Activated T-helper 2 cell treated with anti-CD3 and anti-CD28 coated beads, Interferon-gamma antibody, Interleukin-2, Interleukin-4, amounts not matched to agents 10 μg/mL and 5 μg/mL and 100 μg/mL, durations not matched to agents 14 hours and 24 hours and 36 hours (primary cell): ENCODE measurements at regions of chr3 and their contacts with region 1.

Region 1: GRCh38 chr3:152688313-152688712 is 146.6 kb upstream of the P2RY1 start:
- DNase-seq: no peak
- H3K4me3 Mint-ChIP-seq: no peak overlapping the region
- H3K27ac Mint-ChIP-seq: no peak overlapping the region
- H3K4me1 Mint-ChIP-seq: peaks cover 22% of the 10 kb centered on the region
- H3K27me3 Mint-ChIP-seq: no peaks in the 10 kb centered on the region

Region 2: GRCh38 chr3:151219056-151219455 is 1469.3 kb before region 1 on chr3:
- intact Hi-C with region 1: loop called (anchors 5 kb)
- DNase-seq: no peak
- H3K4me3 Mint-ChIP-seq: no peak overlapping the region
- H3K27ac Mint-ChIP-seq: no peak overlapping the region
- H3K4me1 Mint-ChIP-seq: peaks cover 14% of the 10 kb centered on the region
- H3K27me3 Mint-ChIP-seq: no peaks in the 10 kb centered on the region

Region 3: DNA sequence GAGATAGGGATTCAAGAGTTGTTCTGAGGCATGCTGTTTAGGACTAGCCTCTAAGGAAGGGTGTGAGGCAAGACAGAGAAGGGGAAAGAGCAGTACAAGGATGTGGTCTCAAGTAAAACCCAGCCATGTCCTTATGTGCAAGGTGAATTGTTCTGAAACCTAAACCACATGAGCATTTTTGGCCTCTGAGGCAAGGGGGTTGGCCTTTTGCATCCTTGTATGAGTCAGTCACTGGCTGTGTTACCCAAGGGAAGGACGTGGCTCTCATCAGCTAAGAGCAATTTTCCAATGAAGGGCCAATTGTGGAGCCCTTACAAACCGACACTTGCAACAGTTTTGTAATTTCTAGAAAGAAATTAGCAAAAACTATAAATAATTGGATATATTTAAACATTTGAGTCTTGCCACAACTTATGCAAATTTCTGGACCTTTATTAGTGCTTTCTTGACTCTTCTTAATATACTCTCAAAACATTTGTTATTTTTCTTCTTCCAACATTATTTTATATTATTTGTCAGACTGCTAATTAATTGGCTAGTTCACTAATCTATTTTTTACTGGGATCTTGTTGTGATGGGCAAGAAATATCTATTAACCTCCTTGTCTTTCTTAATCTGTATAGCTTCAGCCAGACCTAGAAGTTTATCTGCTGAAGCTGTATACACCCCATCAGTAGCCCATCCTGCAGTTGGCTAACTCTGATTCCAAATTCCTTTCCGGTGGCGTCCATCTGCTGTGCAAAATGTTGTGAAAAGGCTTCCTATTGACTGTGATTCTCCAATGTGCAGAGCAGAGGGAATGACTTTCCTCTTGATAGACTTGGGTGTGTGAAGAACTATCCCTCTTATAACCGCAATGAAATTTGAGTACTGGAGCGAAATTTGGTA is 49.0 kb after region 1 on chr3:
- intact Hi-C with region 1: loop called (anchors 1 kb)
- DNase-seq: peak; percentile 15
- H3K4me3 Mint-ChIP-seq: no peak overlapping the region
- H3K27ac Mint-ChIP-seq: no peak overlapping the region
- H3K4me1 Mint-ChIP-seq: peaks cover 17% of the 10 kb centered on the region
- H3K27me3 Mint-ChIP-seq: peaks cover 21% of the 10 kb centered on the region

Region 4: GRCh38 chr3:153138276-153139210 is 450.2 kb after region 1 on chr3:
- intact Hi-C with region 1: loop called (anchors 2 kb)
- DNase-seq: peak; percentile 34
- H3K4me3 Mint-ChIP-seq: no peak overlapping the region
- H3K27ac Mint-ChIP-seq: peak overlapping the region; percentile 72
- H3K4me1 Mint-ChIP-seq: peaks cover 17% of the 10 kb centered on the region
- H3K27me3 Mint-ChIP-seq: no peaks in the 10 kb centered on the region